Calu3 (cell line): ENCODE measurements at regions of chr7 and their contacts with region 1.

Region 1: DNA sequence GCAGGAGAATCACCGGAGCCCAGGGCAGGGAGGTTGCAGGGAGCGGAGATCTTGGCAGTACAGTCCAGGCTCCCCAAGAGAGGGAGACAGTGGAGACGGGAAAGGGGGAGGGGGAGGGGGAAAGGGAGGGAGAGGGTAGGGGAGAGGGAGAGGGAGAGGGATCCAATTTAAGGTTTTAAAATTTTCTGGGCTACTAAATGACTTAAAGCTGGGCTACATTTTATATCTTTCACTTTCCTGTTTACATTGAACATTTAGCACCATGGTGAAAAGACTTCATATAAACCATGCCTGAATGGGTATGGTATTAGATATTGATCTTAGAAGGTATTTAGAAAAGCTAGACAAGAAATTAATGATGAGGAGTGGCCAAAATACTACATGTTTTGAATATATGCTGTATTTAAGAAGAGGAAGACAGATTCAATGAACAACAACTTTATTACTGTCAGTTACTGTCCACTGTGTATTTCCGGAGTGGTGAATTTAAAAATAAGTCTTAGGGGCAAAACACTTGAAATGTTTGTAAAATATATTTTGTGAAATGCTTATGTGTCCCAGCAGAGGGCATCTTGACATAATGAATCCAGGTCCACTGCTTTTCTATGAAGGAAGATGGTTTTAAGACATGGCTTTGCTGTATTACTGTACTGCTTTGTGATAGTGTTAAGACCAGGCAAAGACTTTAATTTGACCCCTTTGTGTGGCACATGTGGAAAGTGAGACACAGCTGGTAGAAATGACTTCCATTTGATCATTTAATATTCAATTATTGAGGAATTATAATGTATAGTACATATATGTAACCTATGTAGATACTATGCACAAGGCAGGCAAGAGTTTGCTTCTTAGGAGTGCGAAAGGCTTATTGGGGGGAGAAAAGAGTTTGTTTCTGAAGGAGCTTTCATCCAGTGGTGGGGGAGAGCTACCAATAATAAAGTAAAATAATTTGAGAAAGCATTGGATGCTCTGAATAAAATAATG is 52.8 kb downstream of the NRF1 start:
- DNase-seq: peak; percentile 7
- H3K4me3 Mint-ChIP-seq: no peak overlapping the region
- H3K27ac Mint-ChIP-seq: no peak overlapping the region
- H3K4me1 Mint-ChIP-seq: peaks cover 15% of the 10 kb centered on the region
- H3K27me3 Mint-ChIP-seq: no peaks in the 10 kb centered on the region
- CTCF ChIP-seq: peak; percentile 19

Region 2: GRCh38 chr7:128986609-128987008 is 677.7 kb before region 1 on chr7:
- CTCF ChIA-PET with region 1: no interaction called
- intact Hi-C with region 1: no loop called
- DNase-seq: no peak
- H3K4me3 Mint-ChIP-seq: no peak overlapping the region
- H3K27ac Mint-ChIP-seq: no peak overlapping the region
- H3K4me1 Mint-ChIP-seq: no peaks in the 10 kb centered on the region
- H3K27me3 Mint-ChIP-seq: no peaks in the 10 kb centered on the region
- CTCF ChIP-seq: no peak

Region 3: GRCh38 chr7:129825496-129826267 is 161.4 kb after region 1 on chr7:
- CTCF ChIA-PET with region 1: interaction called, 17 read pairs
- intact Hi-C with region 1: loop called (anchors 1 kb)
- DNase-seq: peak; percentile 95
- H3K4me3 Mint-ChIP-seq: peak overlapping the region; percentile 92
- H3K27ac Mint-ChIP-seq: peak overlapping the region; percentile 87
- H3K4me1 Mint-ChIP-seq: peaks cover 13% of the 10 kb centered on the region
- H3K27me3 Mint-ChIP-seq: no peaks in the 10 kb centered on the region
- CTCF ChIP-seq: peak; percentile 95

Region 4: GRCh38 chr7:129906700-129907099 is 242.4 kb after region 1 on chr7:
- CTCF ChIA-PET with region 1: interaction called, 10 read pairs
- intact Hi-C with region 1: no loop called
- DNase-seq: peak; percentile 55
- H3K4me3 Mint-ChIP-seq: peak overlapping the region; percentile 60
- H3K27ac Mint-ChIP-seq: peak overlapping the region; percentile 73
- H3K4me1 Mint-ChIP-seq: peaks cover 79% of the 10 kb centered on the region
- H3K27me3 Mint-ChIP-seq: no peaks in the 10 kb centered on the region
- CTCF ChIP-seq: no peak